ENCODE measurements at regions of chr1 and their contacts with region 1.

Region 1: GRCh38 chr1:151311589-151312331 is 15.5 kb downstream of the PI4KB start:
- DNase-seq: peak; percentile 85
- H3K4me3 Mint-ChIP-seq: peak overlapping the region; percentile 57
- H3K27ac Mint-ChIP-seq: peak overlapping the region; percentile 94
- H3K4me1 Mint-ChIP-seq: peaks cover 32% of the 10 kb centered on the region
- H3K27me3 Mint-ChIP-seq: no peaks in the 10 kb centered on the region

Region 2: DNA sequence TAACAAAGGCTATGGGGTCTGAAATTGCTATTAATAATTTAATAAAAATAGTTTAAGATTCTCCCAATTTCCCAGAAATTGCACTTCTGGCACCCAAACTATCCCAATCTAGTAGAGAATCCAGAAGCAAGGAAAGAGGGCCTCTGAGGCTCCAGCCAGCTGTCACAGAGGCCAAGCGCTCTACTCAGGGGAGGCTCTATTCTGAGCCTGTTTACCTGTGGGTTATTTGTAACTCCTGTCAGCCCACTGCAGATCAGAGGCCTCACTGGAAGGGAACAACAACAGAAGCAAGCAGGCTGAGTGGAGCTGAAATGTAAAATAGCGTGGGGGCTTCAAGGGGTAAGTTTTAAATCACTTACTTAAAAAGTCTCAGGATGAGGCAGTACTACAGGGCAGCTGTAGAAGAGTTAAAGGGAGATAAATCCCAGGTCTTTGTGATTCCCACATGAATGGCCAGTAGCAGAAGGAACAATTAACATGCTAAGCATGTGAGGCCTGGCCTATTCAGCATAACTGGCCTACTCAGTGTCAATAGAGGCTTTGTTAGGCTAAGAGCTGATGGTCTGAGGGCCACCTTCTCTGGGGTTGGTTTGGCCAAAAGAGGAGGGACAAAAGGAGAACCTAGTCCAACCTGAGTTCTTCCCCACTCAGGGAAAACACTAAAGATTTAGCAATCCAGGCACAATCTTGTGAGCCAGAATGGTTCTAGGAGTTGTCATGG is 16.9 kb before region 1 on chr1:
- intact Hi-C with region 1: loop called (anchors 1 kb)
- DNase-seq: no peak
- H3K4me3 Mint-ChIP-seq: no peak overlapping the region
- H3K27ac Mint-ChIP-seq: no peak overlapping the region
- H3K4me1 Mint-ChIP-seq: no peaks in the 10 kb centered on the region
- H3K27me3 Mint-ChIP-seq: no peaks in the 10 kb centered on the region

Region 3: GRCh38 chr1:151327223-151327902 is 15.6 kb after region 1 on chr1 and contains the start of gene PI4KB:
- intact Hi-C with region 1: loop called (anchors 2 kb)
- DNase-seq: peak; percentile 97
- H3K4me3 Mint-ChIP-seq: peak within 1 kb of the TSS; percentile 95
- H3K27ac Mint-ChIP-seq: peak within 1 kb of the TSS; percentile 97
- H3K4me1 Mint-ChIP-seq: peaks cover 28% of the 10 kb centered on the region
- H3K27me3 Mint-ChIP-seq: no peaks in the 10 kb centered on the region
- total RNA-seq, gene PI4KB: 57.1 and 59.2 TPM in 2 replicates

Region 4: GRCh38 chr1:151346769-151347522 is 35.2 kb after region 1 on chr1 and contains the start of gene RFX5:
- intact Hi-C with region 1: loop called (anchors 1 kb)
- DNase-seq: peak; percentile 98
- H3K4me3 Mint-ChIP-seq: peak within 1 kb of the TSS; percentile 95
- H3K27ac Mint-ChIP-seq: peak within 1 kb of the TSS; percentile 98
- H3K4me1 Mint-ChIP-seq: peaks cover 38% of the 10 kb centered on the region
- H3K27me3 Mint-ChIP-seq: no peaks in the 10 kb centered on the region
- total RNA-seq, gene RFX5: 69.2 and 73.1 TPM in 2 replicates

Region 5: DNA sequence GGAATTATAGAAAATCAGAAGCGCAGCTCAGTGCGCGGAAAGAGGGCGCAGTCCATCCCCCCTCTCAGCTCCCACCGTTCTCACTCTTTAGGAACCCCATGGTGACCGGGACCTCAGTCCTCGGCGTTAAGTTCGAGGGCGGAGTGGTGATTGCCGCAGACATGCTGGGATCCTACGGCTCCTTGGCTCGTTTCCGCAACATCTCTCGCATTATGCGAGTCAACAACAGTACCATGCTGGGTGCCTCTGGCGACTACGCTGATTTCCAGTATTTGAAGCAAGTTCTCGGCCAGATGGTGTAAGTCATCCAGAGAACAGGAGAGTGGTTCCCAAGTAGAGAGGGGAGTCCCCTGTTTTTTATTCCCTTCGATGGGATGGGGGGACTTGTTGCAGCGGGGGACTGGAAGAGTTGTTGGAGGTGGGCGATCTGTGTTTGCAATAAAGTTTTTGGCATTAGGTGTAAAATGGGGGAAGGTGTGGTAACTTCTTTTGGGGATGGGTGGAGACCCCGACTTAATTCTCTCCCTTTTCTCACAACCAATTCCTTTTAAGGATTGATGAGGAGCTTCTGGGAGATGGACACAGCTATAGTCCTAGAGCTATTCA is 88.2 kb after region 1 on chr1:
- intact Hi-C with region 1: loop called (anchors 5 kb)
- DNase-seq: no peak
- H3K4me3 Mint-ChIP-seq: peak overlapping the region; percentile 94
- H3K27ac Mint-ChIP-seq: peak overlapping the region; percentile 100
- H3K4me1 Mint-ChIP-seq: peaks cover 23% of the 10 kb centered on the region
- H3K27me3 Mint-ChIP-seq: no peaks in the 10 kb centered on the region

Measured in activated CD4-positive, alpha-beta T cell treated with anti-CD3 and anti-CD28 coated beads, Interleukin-2, amount 10 ng/mL, durations not matched to agents 24 days and 14 days (primary cell).